Dorsolateral prefrontal cortex (tissue), 120 donors: ENCODE measurements at regions of chr7 and their contacts with region 1.

Region 1: GRCh38 chr7:66557608-66558143 is 71.0 kb upstream of the KCTD7 start:
- DNase-seq: peak; percentile 69 to 85 (median 74)
- H3K4me3 ChIP-seq: peak overlapping the region in 43 of 59 donors; percentile 2 to 51 (median 30)
- H3K27ac ChIP-seq: peak overlapping the region in 30 of 59 donors; percentile 13 to 81 (median 44)
- H3K27me3 ChIP-seq: no peaks in the 10 kb centered on the region
- CTCF ChIP-seq: peak; percentile 72 to 97 (median 92)

Region 2: GRCh38 chr7:66443946-66444345 is 113.7 kb before region 1 on chr7:
- intact Hi-C with region 1: no loop called
- DNase-seq: no peak
- H3K4me3 ChIP-seq: no peak overlapping the region
- H3K27ac ChIP-seq: no peak overlapping the region
- H3K27me3 ChIP-seq: no peaks in the 10 kb centered on the region
- CTCF ChIP-seq: no peak

Region 3: GRCh38 chr7:66591799-66592596 is 34.3 kb after region 1 on chr7:
- intact Hi-C with region 1: loop called in 1 of 2 experiments (anchors 5 kb)
- DNase-seq: peak; percentile 83 to 96 (median 94)
- H3K4me3 ChIP-seq: peak overlapping the region; percentile 62 to 97 (median 89)
- H3K27ac ChIP-seq: peak overlapping the region; percentile 30 to 97 (median 90)
- H3K27me3 ChIP-seq: no peaks in the 10 kb centered on the region
- CTCF ChIP-seq: peak in 7 of 56 donors; percentile 4 to 27 (median 15)

Region 4: DNA sequence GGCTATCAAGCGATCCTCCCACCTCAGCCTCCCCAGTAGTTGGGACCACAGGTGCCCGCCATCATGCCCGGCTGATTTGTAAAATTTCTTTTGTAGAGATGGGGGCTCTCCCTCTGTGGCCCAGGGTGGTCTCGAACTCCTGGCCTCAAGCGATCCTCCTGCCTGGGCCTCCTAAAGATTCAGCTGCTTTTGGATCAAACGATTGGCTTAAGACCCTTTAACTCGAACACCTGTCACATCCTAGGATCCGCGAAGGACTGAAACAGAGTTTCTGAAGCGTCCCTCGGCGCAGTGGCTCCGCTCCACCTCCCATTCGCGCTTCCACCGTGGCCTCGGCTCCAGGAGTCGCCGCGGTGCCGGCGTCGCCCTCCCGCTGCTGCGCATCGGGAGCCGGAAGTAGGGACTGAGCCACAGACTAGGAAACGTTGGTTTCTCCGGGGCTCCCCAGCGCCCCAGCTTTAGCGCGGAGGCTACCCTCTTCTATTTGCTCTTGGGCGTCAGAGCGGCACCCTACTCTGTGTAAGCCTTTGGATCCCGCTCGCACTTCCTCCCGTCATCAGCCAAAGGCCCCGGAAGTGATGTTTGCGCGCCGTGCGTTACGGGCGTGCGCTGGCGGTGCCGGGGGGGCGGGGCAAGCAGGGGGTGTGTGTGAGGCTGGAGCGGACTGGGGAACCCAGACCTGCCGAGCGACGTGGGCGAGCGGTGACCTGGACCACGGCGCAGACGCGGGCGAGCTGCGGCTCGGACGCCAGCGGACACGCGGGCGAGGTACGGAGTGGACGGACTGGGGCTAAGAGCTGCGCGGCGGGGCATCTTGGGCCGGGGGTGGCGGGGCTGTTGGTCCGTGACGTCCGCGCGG is 124.0 kb after region 1 on chr7:
- intact Hi-C with region 1: loop called in 1 of 2 experiments (anchors 10 kb)
- DNase-seq: peak; percentile 92 to 98 (median 96)
- H3K4me3 ChIP-seq: peak overlapping the region; percentile 71 to 99 (median 94)
- H3K27ac ChIP-seq: peak overlapping the region; percentile 43 to 99 (median 96)
- H3K27me3 ChIP-seq: no peaks in the 10 kb centered on the region
- CTCF ChIP-seq: peak in 10 of 56 donors; percentile 9 to 30 (median 14)

Region 5: GRCh38 chr7:66894463-66895080 is 336.9 kb after region 1 on chr7:
- intact Hi-C with region 1: loop called in 1 of 2 experiments (anchors 10 kb)
- DNase-seq: no peak
- H3K4me3 ChIP-seq: no peak overlapping the region
- H3K27ac ChIP-seq: no peak overlapping the region
- H3K27me3 ChIP-seq: no peaks in the 10 kb centered on the region
- CTCF ChIP-seq: peak in 47 of 56 donors; percentile 15 to 62 (median 41)

Region 6: DNA sequence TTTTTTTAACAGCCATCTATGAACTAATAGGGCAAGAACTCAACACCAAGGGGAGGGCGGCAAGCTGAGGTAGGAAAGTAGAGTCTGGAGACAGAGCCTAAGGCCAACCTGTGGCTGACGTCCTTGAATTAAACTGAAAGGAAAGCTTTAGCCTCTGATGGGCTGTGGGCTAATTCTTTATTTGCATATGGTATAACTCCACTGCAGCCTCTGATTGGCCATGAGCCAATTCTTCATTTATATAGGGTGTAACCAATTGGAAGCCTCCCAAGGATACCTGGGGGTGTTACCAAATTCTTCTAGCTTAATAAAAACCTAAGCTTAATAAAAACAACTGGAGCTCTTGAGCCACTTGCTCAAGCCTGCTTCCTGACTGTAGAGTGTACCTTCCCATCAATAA is 449.3 kb after region 1 on chr7:
- intact Hi-C with region 1: loop called in 1 of 2 experiments (anchors 10 kb)
- DNase-seq: no peak
- H3K4me3 ChIP-seq: no peak overlapping the region
- H3K27ac ChIP-seq: no peak overlapping the region
- H3K27me3 ChIP-seq: no peaks in the 10 kb centered on the region
- CTCF ChIP-seq: no peak